Naive thymus-derived CD8-positive, alpha-beta T cell (primary cell): ENCODE measurements at regions of chr1 and their contacts with region 1.

Region 1: DNA sequence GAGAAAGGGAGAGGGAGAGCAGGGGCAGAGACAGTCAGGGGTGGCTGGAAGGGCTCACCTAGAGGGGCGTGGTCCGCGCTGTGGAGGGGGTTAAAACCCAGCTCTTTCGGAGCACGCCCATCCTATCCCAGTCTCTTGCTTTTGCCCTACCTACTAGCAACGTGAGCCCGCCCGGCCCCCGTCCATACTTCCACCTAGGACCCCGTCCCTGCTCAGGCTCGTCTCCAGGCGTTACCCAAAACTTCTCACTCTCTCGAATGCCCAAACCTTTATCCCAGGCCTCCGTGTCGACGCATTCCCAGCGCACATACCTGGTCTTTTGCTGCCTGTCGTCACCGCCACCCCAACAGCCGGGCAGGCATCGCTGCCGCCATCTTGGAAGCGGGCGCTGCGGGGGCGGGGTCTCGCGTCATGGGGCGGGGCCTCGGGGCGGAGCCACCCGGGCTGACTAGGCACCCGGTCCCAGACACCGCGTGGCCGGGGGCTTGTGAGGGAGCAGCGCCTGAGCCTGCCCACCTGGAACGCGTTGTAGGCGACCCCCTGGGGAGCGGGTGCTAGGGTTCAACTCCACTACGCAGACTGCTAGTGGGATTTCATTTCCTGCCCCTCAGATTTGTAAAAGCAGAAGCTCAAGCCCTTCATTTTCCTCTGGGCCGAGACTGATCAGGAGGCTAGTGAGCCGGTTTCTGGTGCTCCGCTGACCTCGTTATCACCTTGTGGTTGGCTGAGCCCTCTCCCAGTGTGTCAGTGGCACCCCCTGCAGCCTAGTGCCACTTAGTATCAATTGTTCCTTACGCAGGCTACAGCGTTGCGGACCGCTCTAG is at the start of gene B4GALT3:
- DNase-seq: peak; percentile 85 to 98 (median 93)
- ATAC-seq: peak; percentile 87 to 92
- H3K4me3 Mint-ChIP-seq: peak within 1 kb of the TSS; percentile 93 to 100 (median 99)
- H3K27ac Mint-ChIP-seq: peak within 1 kb of the TSS; percentile 97 to 100 (median 98)
- H3K4me1 Mint-ChIP-seq: peaks cover 40 to 89% (median 78%) of the 10 kb centered on the region in 4 donors
- H3K27me3 Mint-ChIP-seq: no peaks in the 10 kb centered on the region
- polyA plus RNA-seq, gene B4GALT3: 35.4 to 49.9 (median 37.6) TPM

Region 2: GRCh38 chr1:160997323-160998038 is 179.8 kb before region 1 on chr1:
- POLR2A ChIA-PET with region 1: no interaction called
- DNase-seq: peak; percentile 15 to 78 (median 39)
- ATAC-seq: peak; percentile 76 to 94
- H3K4me3 Mint-ChIP-seq: no peak overlapping the region
- H3K27ac Mint-ChIP-seq: peak overlapping the region in 9 of 10 donors; percentile 3 to 83 (median 54)
- H3K4me1 Mint-ChIP-seq: peaks cover 5 to 9% (median 6%) of the 10 kb centered on the region in 4 donors
- H3K27me3 Mint-ChIP-seq: no peaks in the 10 kb centered on the region

Region 3: DNA sequence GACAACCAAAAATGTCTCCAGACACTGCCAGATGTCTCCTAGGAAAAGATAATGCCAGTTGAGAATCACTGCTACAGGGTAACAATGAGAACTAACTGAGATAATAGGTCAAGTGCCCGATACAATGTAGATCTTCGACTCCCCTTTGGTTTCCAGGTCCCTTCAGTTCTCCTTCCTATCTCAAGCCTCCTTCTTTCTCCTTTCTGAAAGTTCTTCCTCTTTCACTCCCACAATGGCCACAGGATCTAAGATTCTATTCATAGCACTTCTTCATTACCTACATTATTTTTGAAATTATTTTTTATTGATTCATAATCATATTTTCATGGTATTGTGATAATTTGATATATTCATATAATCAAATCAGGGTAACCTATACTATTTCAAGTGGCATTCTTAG is 65.8 kb before region 1 on chr1:
- POLR2A ChIA-PET with region 1: no interaction called
- DNase-seq: no peak
- ATAC-seq: no peak
- H3K4me3 Mint-ChIP-seq: no peak overlapping the region
- H3K27ac Mint-ChIP-seq: peak overlapping the region in 6 of 10 donors; percentile 2 to 58 (median 30)
- H3K4me1 Mint-ChIP-seq: peaks cover 33 to 57% (median 52%) of the 10 kb centered on the region in 4 donors
- H3K27me3 Mint-ChIP-seq: no peaks in the 10 kb centered on the region

Region 4: GRCh38 chr1:161192476-161193465 is 15.4 kb after region 1 on chr1:
- POLR2A ChIA-PET with region 1: interaction called, 59 read pairs
- DNase-seq: peak; percentile 38 to 86 (median 66)
- ATAC-seq: peak; percentile 97
- H3K4me3 Mint-ChIP-seq: peak overlapping the region in 6 of 10 donors; percentile 44 to 68 (median 54)
- H3K27ac Mint-ChIP-seq: peak overlapping the region; percentile 67 to 97 (median 91)
- H3K4me1 Mint-ChIP-seq: peaks cover 10 to 64% (median 47%) of the 10 kb centered on the region in 4 donors
- H3K27me3 Mint-ChIP-seq: no peaks in the 10 kb centered on the region

Region 5: GRCh38 chr1:161238039-161238473 is 60.7 kb after region 1 on chr1 and contains the start of gene NR1I3:
- POLR2A ChIA-PET with region 1: no interaction called
- DNase-seq: no peak
- ATAC-seq: no peak
- H3K4me3 Mint-ChIP-seq: no peak within 1 kb of the TSS
- H3K27ac Mint-ChIP-seq: peak within 1 kb of the TSS in 1 of 10 donors; percentile 78
- H3K4me1 Mint-ChIP-seq: no peaks in the 10 kb centered on the region
- H3K27me3 Mint-ChIP-seq: peaks cover 2 to 9% (median 7%) of the 10 kb centered on the region in 5 donors
- polyA plus RNA-seq, gene NR1I3: 0.19 TPM in 1 of 3 donors, not detected in the others